HAP-1 (cell line): ENCODE measurements at regions of chr17 and their contacts with region 1.

Region 1: GRCh38 chr17:10790491-10791401 is 13.2 kb downstream of the TMEM238L start:
- DNase-seq: peak in 1 of 2 experiments; percentile 2
- H3K4me3 ChIP-seq: no peak overlapping the region
- H3K4me1 ChIP-seq: no peaks in the 10 kb centered on the region
- H3K27me3 ChIP-seq: no peaks in the 10 kb centered on the region

Region 2: DNA sequence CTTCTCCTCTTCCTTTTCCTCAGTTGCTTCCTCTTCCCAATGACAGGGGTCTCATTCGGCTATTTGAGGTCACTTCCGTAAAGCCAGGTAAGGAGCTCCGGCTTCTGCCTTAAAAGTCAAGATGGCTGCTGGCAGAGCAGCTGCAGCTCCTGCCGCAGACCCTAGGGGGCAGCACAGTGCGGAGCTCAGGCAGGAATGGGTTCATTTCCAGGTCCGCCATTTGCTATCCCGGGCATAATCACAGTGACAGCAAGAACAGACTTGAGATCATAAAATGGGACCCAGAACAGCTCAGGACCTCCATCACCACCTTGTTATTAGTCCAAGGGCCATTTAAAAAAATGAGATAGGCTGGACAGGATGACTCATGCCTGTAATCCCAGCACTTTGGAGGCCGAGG is 1007.1 kb after region 1 on chr17:
- in situ Hi-C with region 1: loop called (anchors 25 kb)
- DNase-seq: no peak
- H3K4me3 ChIP-seq: no peak overlapping the region
- H3K4me1 ChIP-seq: no peaks in the 10 kb centered on the region
- H3K27me3 ChIP-seq: no peaks in the 10 kb centered on the region